Right cardiac atrium (tissue), 5 donors: ENCODE measurements at regions of chr1 and their contacts with region 1.

Region 1: GRCh38 chr1:67766141-67766978 is 66.9 kb downstream of the GNG12 start:
- DNase-seq: peak in 2 of 3 donors; percentile 40 to 73
- ATAC-seq: peak; percentile 75 to 76
- H3K4me3 ChIP-seq: peak overlapping the region; percentile 24
- H3K27ac ChIP-seq: no peak overlapping the region
- H3K4me1 ChIP-seq: peaks cover 3% of the 10 kb centered on the region
- H3K27me3 ChIP-seq: no peaks in the 10 kb centered on the region

Region 2: DNA sequence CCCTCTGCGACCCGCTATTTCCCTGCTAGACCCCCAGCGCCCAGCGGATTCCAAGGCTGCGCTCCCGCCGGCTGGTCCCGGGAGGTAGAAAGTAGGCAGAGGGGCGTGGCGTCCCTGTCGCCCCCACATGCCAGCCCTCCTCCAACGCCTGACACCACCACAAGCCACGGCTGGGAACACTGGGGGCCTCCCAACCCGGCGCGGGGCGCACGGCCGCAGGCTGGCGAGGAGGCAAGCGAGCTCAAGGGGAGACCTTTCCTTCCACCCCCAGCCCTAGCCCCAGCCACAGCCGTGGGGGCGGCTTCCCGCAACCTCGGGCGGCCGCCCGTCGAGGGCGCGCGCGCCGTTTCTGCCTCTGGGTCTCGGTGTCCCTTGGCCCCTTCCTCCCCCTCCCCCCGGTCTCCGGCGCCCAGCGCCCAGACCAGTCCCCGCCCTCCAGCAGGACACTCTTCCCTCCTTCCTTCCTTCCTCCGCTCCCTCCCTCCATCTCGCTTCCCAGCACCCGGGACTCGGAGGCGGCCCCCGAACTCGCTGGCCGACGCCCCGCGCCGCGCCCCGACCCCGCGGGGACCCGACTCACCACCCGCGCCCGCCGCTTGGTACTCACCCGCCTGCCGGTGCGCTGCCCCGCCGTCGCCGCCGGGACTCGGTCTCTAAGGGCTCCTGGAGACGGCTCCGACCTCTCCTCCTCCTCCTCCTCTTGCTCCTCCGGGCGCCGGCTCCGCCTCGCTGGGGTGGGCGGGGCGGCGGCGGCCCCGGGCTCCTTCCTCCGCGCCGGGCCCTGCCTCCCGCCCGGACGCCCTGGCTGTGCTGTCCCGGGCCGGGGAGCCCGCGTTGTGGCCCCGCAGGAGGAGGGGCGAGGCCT is 66.6 kb after region 1 on chr1 and contains the start of gene GNG12:
- intact Hi-C with region 1: loop called in 3 of 4 experiments (anchors 5 to 10 kb)
- DNase-seq: peak; percentile 82 to 90 (median 89)
- ATAC-seq: peak; percentile 93 to 94
- H3K4me3 ChIP-seq: peak within 1 kb of the TSS; percentile 59
- H3K27ac ChIP-seq: peak within 1 kb of the TSS; percentile 57
- H3K4me1 ChIP-seq: no peaks in the 10 kb centered on the region
- H3K27me3 ChIP-seq: no peaks in the 10 kb centered on the region
- total RNA-seq, gene GNG12: 30.1 to 44.9 (median 32.1) TPM

Region 3: GRCh38 chr1:67847466-67847865 is 81.1 kb after region 1 on chr1:
- intact Hi-C with region 1: loop called in 1 of 4 experiments (anchors 5 kb)
- DNase-seq: no peak
- ATAC-seq: no peak
- H3K4me3 ChIP-seq: no peak overlapping the region
- H3K27ac ChIP-seq: no peak overlapping the region
- H3K4me1 ChIP-seq: peaks cover 2% of the 10 kb centered on the region
- H3K27me3 ChIP-seq: no peaks in the 10 kb centered on the region

Region 4: DNA sequence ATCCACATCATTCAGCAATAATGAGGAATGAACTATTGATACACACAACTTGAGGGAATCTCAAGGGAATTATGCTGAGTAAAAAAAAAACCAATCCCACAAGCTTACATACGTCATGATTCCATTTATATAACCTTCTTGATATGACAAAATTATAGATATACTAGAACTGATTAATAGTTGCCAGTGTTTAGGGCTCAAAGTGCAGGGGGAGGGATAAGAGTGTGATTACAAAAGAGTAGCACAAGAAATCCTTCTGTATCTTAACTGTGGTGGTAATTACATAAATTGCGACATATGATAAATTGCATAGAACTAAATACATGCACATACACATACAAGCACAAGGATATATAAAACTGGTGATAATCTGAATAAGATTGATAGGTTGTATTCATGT is 270.6 kb after region 1 on chr1:
- intact Hi-C with region 1: no loop called
- DNase-seq: no peak
- ATAC-seq: no peak
- H3K4me3 ChIP-seq: no peak overlapping the region
- H3K27ac ChIP-seq: no peak overlapping the region
- H3K4me1 ChIP-seq: no peaks in the 10 kb centered on the region
- H3K27me3 ChIP-seq: no peaks in the 10 kb centered on the region

Region 5: DNA sequence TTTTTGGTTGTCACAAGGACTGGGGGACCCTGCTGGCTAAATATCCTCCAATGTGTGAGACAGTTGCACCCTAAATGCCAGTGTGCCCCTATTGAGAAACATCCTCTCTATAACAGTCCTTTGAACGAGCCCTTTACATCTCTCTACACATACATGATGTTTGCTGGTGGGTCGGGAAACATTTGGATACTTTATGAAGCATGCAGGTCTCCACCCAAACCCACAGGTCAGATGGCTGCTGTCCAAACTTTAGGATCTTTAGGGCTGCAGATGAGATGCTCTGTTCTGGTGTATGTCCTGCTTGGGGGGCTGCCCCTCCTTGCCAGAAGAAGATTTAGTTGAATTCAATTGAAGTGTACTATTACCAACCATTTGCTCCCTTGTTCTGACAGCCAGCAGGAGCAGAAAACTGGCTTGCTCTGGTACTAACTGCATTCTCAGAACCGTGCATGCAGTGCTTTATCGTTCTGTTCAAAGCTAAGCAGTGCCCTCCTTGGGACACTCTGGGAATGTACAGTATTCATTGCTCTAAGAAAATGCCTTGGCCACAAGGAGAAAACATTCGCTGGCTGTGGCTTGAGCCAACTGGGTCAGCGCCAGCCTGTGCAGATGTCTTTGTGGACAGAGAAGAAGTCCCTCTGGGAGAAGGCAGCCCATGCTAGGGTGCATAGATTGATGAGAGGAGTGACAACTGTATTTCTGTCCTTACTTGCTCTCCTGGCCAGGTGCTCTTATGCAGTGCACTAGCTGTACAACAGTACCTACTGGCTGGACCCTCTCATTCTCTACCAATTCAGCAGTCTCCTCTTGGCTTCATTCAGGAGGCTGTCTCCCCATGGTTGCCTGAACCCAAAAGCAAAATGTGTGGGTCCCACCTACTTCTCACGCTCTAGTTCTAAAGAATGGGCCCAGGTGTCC is 345.4 kb after region 1 on chr1:
- intact Hi-C with region 1: loop called in 3 of 4 experiments (anchors 5 to 10 kb)
- DNase-seq: peak; percentile 62 to 87 (median 87)
- ATAC-seq: peak; percentile 84 to 91
- H3K4me3 ChIP-seq: no peak overlapping the region
- H3K27ac ChIP-seq: no peak overlapping the region
- H3K4me1 ChIP-seq: peaks cover 7% of the 10 kb centered on the region
- H3K27me3 ChIP-seq: no peaks in the 10 kb centered on the region